T-cell (primary cell): ENCODE measurements at regions of chr20 and their contacts with region 1.

Region 1: DNA sequence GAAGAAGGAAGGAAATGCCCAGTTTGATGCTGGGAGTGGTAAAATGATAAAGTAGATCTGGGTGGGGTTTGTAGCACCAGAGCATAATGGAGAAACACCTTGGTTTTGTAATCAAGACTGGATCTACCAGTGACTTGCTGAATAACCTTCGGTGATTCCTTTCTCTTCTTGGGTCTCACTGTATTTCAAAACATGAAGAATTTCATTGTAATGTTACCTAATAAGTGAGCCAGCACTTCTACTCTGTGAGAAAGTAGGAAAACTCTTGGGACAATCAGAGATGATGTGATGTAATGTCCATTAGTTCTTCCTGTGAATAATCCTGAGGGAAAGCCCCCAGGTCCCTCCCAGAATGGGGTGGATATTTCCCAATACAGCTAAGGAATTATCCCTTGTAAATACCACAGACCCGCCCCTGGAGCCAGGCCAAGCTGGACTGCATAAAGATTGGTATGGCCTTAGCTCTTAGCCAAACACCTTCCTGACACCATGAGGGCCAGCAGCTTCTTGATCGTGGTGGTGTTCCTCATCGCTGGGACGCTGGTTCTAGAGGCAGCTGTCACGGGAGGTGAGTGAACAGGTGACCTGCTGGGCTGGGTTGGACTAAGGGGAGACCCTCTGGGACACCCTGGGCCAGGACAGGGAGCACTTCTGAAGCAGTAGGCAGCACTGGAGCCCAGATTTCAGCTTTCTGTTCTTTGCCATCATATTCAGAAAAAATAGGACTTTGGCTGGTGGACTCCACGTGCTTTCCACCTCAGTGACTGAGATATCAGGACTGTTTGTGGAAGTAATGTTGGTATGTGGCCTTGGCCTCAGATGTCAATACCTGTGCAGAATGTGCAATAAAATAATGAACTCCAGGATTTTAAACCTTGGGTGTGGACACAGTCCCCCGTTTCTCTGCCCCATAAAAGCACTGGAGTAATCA is at the start of gene PI3:
- DNase-seq: no peak
- ATAC-seq: no peak
- H3K4me3 ChIP-seq: no peak within 1 kb of the TSS
- H3K4me3 Mint-ChIP-seq: no peak within 1 kb of the TSS
- H3K27ac ChIP-seq: no peak within 1 kb of the TSS
- H3K27ac Mint-ChIP-seq: no peak within 1 kb of the TSS
- H3K4me1 ChIP-seq: no peaks in the 10 kb centered on the region
- H3K4me1 Mint-ChIP-seq: no peaks in the 10 kb centered on the region
- H3K27me3 ChIP-seq: peaks cover 2 to 22% of the 10 kb centered on the region in 2 experiments
- H3K27me3 Mint-ChIP-seq: peaks cover 7 to 10% of the 10 kb centered on the region in 2 donors
- total RNA-seq, gene PI3: 0.51 TPM in 1 of 5 donors, not detected in the others

Region 2: GRCh38 chr20:44495802-44496481 is 678.8 kb before region 1 on chr20:
- CTCF ChIA-PET with region 1: interaction called in 1 of 2 experiments, 12 read pairs
- POLR2A ChIA-PET with region 1: no interaction called
- DNase-seq: no peak
- ATAC-seq: peak in 3 of 4 experiments; percentile 55 to 76 (median 60)
- H3K4me3 ChIP-seq: no peak overlapping the region
- H3K4me3 Mint-ChIP-seq: no peak overlapping the region
- H3K27ac ChIP-seq: no peak overlapping the region
- H3K27ac Mint-ChIP-seq: peak overlapping the region; percentile 63 to 79
- H3K4me1 ChIP-seq: peaks cover 0 to 10% of the 10 kb centered on the region in 2 experiments
- H3K4me1 Mint-ChIP-seq: peaks cover 6 to 57% (median 42%) of the 10 kb centered on the region in 3 donors
- H3K27me3 ChIP-seq: no peaks in the 10 kb centered on the region
- H3K27me3 Mint-ChIP-seq: no peaks in the 10 kb centered on the region